H1 (cell line): ENCODE measurements at regions of chr1 and their contacts with region 1.

Region 1: GRCh38 chr1:167270349-167271092 is 49.8 kb downstream of the POU2F1 start:
- DNase-seq: no peak
- H3K4me3 ChIP-seq: no peak overlapping the region
- H3K27ac ChIP-seq: no peak overlapping the region
- H3K4me1 ChIP-seq: peaks cover 0 to 17% (median 11%) of the 10 kb centered on the region in 4 experiments; a peak in 5 of 7 replicates
- H3K27me3 ChIP-seq: no peaks in the 10 kb centered on the region
- CTCF ChIP-seq: no peak
- EP300 ChIP-seq: no peak
- POLR2A ChIP-seq: no peak
- RAD21 ChIP-seq: no peak

Region 2: GRCh38 chr1:167196166-167196565 is 74.4 kb before region 1 on chr1:
- CTCF ChIA-PET with region 1: no interaction called
- POLR2A ChIA-PET with region 1: no interaction called
- DNase-seq: no peak
- H3K4me3 ChIP-seq: no peak overlapping the region
- H3K27ac ChIP-seq: no peak overlapping the region
- H3K4me1 ChIP-seq: no peaks in the 10 kb centered on the region; a peak in 3 of 7 replicates
- H3K27me3 ChIP-seq: no peaks in the 10 kb centered on the region
- CTCF ChIP-seq: no peak
- EP300 ChIP-seq: no peak
- POLR2A ChIP-seq: no peak
- RAD21 ChIP-seq: no peak

Region 3: DNA sequence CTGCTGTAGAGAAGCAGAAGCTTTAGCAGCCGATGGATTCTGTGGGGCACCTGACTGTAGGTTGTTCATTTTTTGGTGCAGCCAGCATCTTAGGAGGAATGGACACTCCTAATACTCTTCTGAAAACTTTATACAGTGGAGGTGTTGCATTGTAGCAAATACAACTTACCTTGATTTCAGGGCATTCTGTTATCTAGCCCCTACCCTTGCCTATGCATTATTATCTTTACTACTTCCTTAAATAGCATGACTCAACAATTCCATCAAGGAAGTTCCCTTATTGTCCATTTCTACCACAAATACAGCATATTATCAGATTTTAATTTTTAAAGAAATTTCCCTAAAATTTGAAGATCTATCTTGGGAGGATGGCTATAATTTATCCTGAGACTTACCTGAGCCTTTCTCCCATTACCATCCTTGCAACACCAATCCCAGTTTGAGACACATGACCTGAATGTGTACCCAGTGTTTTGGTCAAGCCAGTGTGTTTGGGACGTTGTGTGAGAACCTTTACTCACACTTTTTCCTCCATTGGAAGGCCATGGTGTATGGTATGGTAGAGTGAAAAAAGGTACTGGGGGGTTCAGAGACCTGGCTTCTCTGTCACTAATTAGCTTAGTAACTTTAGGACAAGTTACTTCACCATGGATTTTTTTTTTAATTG is 40.7 kb before region 1 on chr1:
- CTCF ChIA-PET with region 1: interaction called, 13 read pairs
- POLR2A ChIA-PET with region 1: no interaction called
- DNase-seq: no peak
- H3K4me3 ChIP-seq: no peak overlapping the region
- H3K27ac ChIP-seq: no peak overlapping the region
- H3K4me1 ChIP-seq: peaks cover 0 to 42% (median 11%) of the 10 kb centered on the region in 4 experiments; a peak in 6 of 7 replicates
- H3K27me3 ChIP-seq: no peaks in the 10 kb centered on the region
- CTCF ChIP-seq: no peak
- EP300 ChIP-seq: no peak
- POLR2A ChIP-seq: no peak
- RAD21 ChIP-seq: no peak

Region 4: DNA sequence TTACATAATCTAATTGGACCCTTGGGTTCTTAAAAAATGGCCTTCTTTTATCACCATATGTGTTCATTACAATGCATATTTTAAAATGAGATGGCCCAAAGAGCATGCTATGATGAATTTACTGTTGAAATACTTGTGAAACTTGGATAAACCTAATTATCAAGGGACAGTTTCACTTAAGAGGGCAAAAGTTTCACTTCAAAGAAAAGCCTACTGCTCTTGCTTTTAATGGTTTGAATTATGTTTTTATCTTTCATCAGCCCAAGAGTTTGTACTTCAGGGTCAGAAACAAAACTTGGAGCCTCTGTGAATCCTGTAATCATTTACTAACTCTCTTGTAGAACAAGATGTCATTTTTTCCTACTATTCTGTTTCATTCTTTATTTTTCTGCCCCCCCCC is 17.5 kb before region 1 on chr1:
- CTCF ChIA-PET with region 1: interaction called, 24 read pairs
- POLR2A ChIA-PET with region 1: interaction called, 3 read pairs
- DNase-seq: no peak
- H3K4me3 ChIP-seq: no peak overlapping the region
- H3K27ac ChIP-seq: no peak overlapping the region
- H3K4me1 ChIP-seq: no peaks in the 10 kb centered on the region; a peak in 1 of 7 replicates
- H3K27me3 ChIP-seq: no peaks in the 10 kb centered on the region
- CTCF ChIP-seq: no peak
- EP300 ChIP-seq: no peak
- POLR2A ChIP-seq: no peak
- RAD21 ChIP-seq: no peak

Region 5: DNA sequence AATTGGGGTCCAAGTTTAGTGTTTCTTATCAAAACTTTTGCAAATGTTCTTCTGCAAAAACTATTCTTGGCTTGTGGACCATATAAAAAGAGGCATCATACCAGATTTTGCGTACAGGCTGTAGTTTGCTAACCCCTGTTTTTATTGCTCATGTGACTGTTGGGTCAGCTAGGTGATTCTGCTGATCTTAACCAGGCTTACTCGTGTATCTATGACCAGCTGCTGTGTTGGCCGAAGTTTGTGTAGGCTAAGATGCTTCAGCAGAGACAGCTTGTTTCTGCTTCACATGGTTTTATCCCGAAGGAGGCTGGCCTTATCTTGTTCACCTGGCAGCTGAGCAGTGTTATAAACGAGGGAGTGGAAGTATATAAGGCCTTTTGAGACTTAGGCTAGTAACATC is 11.7 kb before region 1 on chr1:
- CTCF ChIA-PET with region 1: interaction called, 24 read pairs
- POLR2A ChIA-PET with region 1: interaction called, 3 read pairs
- DNase-seq: no peak
- H3K4me3 ChIP-seq: no peak overlapping the region
- H3K27ac ChIP-seq: no peak overlapping the region
- H3K4me1 ChIP-seq: no peaks in the 10 kb centered on the region; a peak in 1 of 7 replicates
- H3K27me3 ChIP-seq: no peaks in the 10 kb centered on the region
- CTCF ChIP-seq: no peak
- EP300 ChIP-seq: no peak
- POLR2A ChIP-seq: no peak
- RAD21 ChIP-seq: no peak